PC-3 (cell line): ENCODE measurements at regions of chr4 and their contacts with region 1.

Region 1: GRCh38 chr4:71184195-71184781 is 154.5 kb upstream of the SLC4A4 start:
- DNase-seq: peak; percentile 80
- ATAC-seq: peak; percentile 10; the same call in 1 of the 2 replicates
- H3K4me3 ChIP-seq: no peak overlapping the region
- H3K27ac ChIP-seq: no peak overlapping the region
- H3K4me1 ChIP-seq: peaks cover 21% of the 10 kb centered on the region
- H3K27me3 ChIP-seq: peaks cover 16% of the 10 kb centered on the region
- CTCF ChIP-seq: peak; percentile 95

Region 2: DNA sequence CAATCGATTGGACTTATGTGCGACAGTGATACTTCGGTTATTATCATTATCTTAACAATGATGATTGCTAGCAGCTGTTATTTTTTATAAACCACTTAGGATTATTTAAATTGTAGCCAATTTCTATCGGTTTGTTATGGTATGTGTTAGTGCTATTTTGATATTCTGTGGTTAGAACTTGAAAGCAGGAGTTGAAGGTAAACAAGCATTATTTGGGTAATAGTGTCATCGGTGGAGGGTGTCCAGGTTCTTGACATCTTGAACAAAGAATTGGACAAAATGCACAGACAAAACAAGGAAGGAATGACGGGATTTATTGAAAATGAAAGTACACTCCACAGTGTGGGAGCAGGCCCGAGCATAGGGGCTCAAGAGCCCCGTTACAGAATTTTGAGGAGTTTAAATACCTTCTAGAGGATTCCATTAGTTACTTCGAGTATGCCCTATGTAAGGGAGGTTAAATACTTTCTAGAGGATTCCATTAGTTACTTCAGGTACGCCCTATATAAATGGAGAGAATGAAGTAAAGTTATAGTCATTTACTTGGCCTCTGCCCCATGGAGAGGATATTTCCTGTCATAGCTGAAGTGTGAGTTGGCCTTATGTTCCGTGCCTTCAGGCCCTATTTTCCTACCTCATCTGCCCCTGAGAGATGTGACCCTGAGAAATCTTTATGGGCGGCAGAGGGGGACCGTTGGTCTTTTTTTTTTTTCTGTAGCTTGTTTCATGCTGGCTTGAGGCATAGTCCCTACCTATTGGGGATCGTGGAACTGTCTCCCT is 269.1 kb before region 1 on chr4:
- CTCF ChIA-PET with region 1: no interaction called
- POLR2A ChIA-PET with region 1: no interaction called
- intact Hi-C with region 1: no loop called
- DNase-seq: peak; percentile 88
- ATAC-seq: peak; percentile 85
- H3K4me3 ChIP-seq: peak overlapping the region; percentile 65
- H3K27ac ChIP-seq: peak overlapping the region; percentile 64
- H3K4me1 ChIP-seq: peaks cover 24% of the 10 kb centered on the region
- H3K27me3 ChIP-seq: no peaks in the 10 kb centered on the region
- CTCF ChIP-seq: no peak

Region 3: GRCh38 chr4:71050809-71051208 is 133.5 kb before region 1 on chr4:
- CTCF ChIA-PET with region 1: no interaction called
- POLR2A ChIA-PET with region 1: no interaction called
- intact Hi-C with region 1: loop called (anchors 5 kb)
- DNase-seq: peak; percentile 43
- ATAC-seq: peak; percentile 64; the same call in 1 of the 2 replicates
- H3K4me3 ChIP-seq: no peak overlapping the region
- H3K27ac ChIP-seq: no peak overlapping the region
- H3K4me1 ChIP-seq: no peaks in the 10 kb centered on the region
- H3K27me3 ChIP-seq: no peaks in the 10 kb centered on the region
- CTCF ChIP-seq: peak; percentile 29; the same call in 1 of the 2 replicates

Region 4: DNA sequence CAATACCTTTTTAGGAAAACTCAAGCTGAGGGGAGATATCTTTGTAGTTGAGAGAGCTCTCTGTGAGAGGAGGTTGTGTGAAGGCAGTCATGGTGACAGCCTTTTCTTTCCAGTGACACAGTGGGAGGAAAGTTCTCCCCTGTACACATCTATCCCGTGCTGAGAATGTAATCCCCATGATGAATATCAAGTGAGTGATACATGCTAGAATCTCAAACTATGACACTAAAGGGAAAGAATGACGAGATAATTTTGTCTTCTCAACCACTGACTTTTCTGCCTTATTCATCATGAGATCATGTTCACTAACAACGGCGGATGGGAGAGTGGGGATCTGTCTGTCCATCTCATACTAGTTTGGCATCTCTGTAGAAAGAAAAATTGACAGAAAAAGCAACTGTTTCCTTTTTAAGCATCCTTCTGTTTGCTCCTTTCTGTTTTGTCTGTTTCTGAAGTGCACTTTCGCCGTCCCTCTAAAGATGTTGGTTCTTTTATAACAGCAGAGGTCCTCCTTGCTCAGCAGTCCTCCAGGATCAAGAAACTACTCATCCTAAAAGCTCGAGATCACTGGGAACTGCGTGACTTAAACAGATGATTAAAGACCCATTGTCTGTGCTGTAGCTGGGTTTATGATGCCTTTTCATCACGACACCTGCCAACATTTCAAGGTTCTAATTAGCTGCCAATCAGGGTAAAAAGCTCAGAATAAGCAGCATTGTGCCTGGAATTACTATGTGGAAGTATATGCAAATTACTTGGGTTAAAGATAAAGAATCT is 53.3 kb before region 1 on chr4:
- CTCF ChIA-PET with region 1: interaction called, 4 read pairs
- POLR2A ChIA-PET with region 1: interaction called, 5 read pairs
- intact Hi-C with region 1: loop called (anchors 2 kb)
- DNase-seq: peak; percentile 61
- ATAC-seq: peak; percentile 75
- H3K4me3 ChIP-seq: peak overlapping the region; percentile 39; the same call in 1 of the 2 replicates
- H3K27ac ChIP-seq: peak overlapping the region; percentile 18
- H3K4me1 ChIP-seq: peaks cover 34% of the 10 kb centered on the region
- H3K27me3 ChIP-seq: no peaks in the 10 kb centered on the region
- CTCF ChIP-seq: peak; percentile 62

Region 5: DNA sequence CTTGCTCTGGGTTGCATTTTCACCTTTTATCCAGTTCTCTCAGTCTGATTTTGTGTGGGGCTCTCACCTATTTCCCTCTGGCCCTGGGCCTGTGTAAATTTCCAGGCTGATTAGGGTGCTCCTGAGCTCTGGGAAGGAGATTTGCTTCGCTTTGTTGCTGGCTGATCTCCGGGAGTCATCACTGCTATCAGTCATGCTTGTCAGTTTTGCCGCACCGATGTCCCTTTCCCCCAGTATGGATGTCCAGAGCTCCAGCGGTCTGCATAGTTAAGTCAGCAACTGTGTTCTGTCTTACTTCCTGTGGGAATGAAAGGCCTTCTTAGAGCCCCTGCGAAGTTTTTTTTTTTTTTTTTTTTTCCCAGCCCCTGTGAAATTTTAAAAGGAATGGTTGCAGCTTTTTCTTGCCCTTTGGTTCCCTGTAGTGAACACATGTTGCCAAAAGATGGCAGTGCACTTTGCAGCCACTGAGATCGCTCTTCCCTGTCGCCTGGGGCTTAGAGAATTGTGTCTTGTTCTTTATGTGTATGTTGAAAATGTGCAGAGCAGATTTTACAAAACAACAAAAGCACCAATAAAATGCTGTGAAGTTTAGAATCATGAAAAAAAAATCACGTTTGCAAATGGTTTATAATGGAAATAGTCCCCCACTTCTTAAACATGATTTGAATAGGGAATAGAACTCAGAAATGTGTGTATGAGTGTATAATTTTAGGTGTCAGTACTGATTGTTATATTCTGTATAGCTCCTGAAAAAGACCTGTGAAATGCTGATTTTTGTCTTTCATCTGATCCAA is 45.4 kb after region 1 on chr4:
- CTCF ChIA-PET with region 1: interaction called, 5 read pairs
- POLR2A ChIA-PET with region 1: interaction called, 18 read pairs
- intact Hi-C with region 1: loop called (anchors 2 kb)
- DNase-seq: peak; percentile 70
- ATAC-seq: peak; percentile 88
- H3K4me3 ChIP-seq: peak overlapping the region; percentile 53
- H3K27ac ChIP-seq: no peak overlapping the region
- H3K4me1 ChIP-seq: peaks cover 6% of the 10 kb centered on the region; the same call in 1 of the 2 replicates
- H3K27me3 ChIP-seq: no peaks in the 10 kb centered on the region
- CTCF ChIP-seq: peak; percentile 90

Region 6: GRCh38 chr4:71259911-71260331 is 75.6 kb after region 1 on chr4:
- CTCF ChIA-PET with region 1: interaction called, 6 read pairs
- POLR2A ChIA-PET with region 1: no interaction called
- intact Hi-C with region 1: loop called (anchors 5 kb)
- DNase-seq: no peak
- ATAC-seq: no peak
- H3K4me3 ChIP-seq: no peak overlapping the region
- H3K27ac ChIP-seq: no peak overlapping the region
- H3K4me1 ChIP-seq: no peaks in the 10 kb centered on the region
- H3K27me3 ChIP-seq: no peaks in the 10 kb centered on the region
- CTCF ChIP-seq: no peak

Region 7: DNA sequence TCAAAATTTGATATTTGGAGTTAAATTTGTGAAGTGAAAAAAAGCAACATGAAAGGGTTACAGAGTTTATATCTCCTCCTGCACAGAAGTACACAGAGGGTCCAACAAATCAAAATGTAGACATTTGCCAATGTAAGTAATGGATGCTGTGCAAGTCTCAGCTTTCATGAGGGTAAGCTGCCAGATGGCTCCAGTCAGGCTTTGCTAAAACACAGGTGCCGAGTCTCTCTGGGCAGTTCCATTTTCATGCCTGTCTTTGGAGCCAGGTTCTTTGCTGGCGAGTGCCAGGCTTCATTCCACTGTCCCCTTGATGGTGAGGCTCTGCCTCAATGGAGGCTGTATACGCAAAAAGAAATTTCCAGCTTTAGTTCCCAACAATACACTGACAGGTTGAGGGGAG is 182.5 kb after region 1 on chr4:
- CTCF ChIA-PET with region 1: no interaction called
- POLR2A ChIA-PET with region 1: no interaction called
- intact Hi-C with region 1: no loop called
- DNase-seq: no peak
- ATAC-seq: no peak
- H3K4me3 ChIP-seq: no peak overlapping the region
- H3K27ac ChIP-seq: no peak overlapping the region
- H3K4me1 ChIP-seq: no peaks in the 10 kb centered on the region
- H3K27me3 ChIP-seq: no peaks in the 10 kb centered on the region
- CTCF ChIP-seq: no peak

Region 8: GRCh38 chr4:71498002-71498401 is 313.7 kb after region 1 on chr4:
- CTCF ChIA-PET with region 1: no interaction called
- POLR2A ChIA-PET with region 1: no interaction called
- intact Hi-C with region 1: loop called (anchors 10 kb)
- DNase-seq: peak; percentile 78
- ATAC-seq: peak; percentile 95
- H3K4me3 ChIP-seq: no peak overlapping the region
- H3K27ac ChIP-seq: peak overlapping the region; percentile 11
- H3K4me1 ChIP-seq: peaks cover 17% of the 10 kb centered on the region
- H3K27me3 ChIP-seq: no peaks in the 10 kb centered on the region
- CTCF ChIP-seq: no peak